ENCODE measurements at regions of chr10 and their contacts with region 1.

Region 1: DNA sequence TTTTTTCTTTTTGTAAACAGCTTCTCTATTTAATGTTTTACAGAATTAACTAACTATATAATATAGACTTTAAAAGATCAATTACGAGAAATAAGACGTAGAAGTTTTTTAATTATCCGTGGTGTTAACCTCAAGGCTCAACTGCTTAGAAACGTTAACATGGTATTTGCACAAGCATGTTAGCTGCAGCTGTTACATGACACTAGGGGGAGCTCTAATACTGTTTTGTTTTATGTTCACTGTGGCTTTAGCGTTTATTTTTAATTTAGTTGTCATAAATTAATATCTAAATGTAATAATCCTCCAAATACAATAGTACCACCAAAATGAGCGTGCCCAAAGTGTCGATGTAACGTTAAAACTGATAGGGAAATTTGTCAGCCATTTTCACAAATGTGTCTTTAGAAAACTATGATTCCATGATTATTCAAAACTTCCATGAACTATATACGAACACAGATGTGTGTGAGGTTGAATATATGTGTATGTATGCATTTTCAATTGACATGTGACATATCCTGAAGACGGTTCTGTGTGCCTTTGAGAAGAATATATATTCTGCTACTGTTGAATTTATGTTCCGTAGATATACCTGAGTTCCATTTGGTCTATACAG is 828.8 kb upstream of the MBL2 start:
- DNase-seq: peak; percentile 28
- ATAC-seq: peak; percentile 27; the same call in 1 of the 2 replicates
- H3K4me3 ChIP-seq: no peak overlapping the region
- H3K27ac ChIP-seq: no peak overlapping the region
- H3K4me1 ChIP-seq: no peaks in the 10 kb centered on the region
- H3K27me3 ChIP-seq: no peaks in the 10 kb centered on the region
- CTCF ChIP-seq: peak; percentile 75
- POLR2A ChIP-seq: no peak
- RAD21 ChIP-seq: peak; percentile 57

Region 2: DNA sequence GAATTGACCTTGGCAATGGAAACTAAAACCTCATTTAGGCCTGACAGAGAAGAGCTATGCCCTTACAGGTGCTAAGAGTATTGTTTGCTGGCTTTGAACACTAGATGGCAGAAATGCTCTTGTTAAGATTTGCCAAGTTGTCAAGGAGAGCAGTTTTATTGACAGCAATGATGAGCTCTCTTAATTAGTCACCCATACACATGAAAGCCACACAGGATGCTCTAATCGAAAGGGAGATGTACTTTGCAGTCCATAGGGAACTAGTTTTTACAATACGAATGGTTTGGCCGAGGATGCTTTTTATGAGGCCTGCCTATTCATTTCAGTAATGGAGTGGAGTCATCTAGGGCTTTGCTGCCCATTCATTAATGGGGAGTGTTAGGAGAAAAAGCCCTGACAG is 783.3 kb before region 1 on chr10:
- CTCF ChIA-PET with region 1: no interaction called
- POLR2A ChIA-PET with region 1: no interaction called
- dilution Hi-C with region 1: no loop called
- in situ Hi-C with region 1: no loop called
- intact Hi-C with region 1: loop called (anchors 5 kb)
- DNase-seq: peak; percentile 59
- ATAC-seq: peak; percentile 73
- H3K4me3 ChIP-seq: no peak overlapping the region
- H3K27ac ChIP-seq: no peak overlapping the region
- H3K4me1 ChIP-seq: no peaks in the 10 kb centered on the region
- H3K27me3 ChIP-seq: no peaks in the 10 kb centered on the region
- CTCF ChIP-seq: peak; percentile 54
- POLR2A ChIP-seq: no peak
- RAD21 ChIP-seq: peak; percentile 67

Region 3: DNA sequence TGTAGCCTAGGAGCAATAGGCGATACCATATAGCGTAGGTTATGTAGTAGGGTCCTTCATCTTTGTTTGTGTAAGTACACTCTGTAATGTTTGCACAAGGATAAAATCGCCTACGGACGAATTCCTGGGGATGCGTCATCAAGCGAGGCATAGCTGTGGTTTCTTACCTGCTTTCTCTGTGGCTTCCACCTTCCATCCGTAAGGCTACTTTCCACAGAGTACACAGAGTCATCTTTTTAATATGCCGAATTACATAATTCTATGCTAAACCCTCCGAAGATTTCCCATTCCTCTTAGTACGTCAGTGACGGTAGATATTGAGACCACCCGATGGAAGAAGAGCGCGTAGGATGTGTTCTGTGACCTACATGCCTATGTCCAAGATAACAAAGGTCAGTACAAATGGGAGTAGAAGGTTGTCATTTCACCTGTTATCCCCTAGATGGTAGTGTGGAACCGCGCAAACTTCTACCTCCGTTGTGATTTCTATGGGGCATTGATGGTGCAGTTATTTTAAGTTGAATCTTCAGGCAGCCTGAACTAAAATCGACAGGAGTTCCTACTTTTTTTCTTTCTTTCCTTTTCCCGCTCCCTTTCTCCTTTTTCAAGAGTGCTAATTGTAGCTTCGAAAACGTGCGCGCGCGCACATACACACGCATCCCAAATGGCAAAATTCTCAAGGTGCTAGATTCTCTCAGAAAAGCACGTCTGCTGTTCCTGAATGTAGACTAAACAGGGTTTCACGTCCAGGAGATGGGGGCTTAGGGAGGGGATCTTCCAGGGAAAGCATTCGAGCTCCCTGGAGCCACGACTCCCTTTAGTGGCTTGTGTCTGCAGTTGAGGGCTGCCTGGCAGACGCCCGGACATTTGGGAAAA is 717.1 kb before region 1 on chr10:
- CTCF ChIA-PET with region 1: no interaction called
- POLR2A ChIA-PET with region 1: no interaction called
- dilution Hi-C with region 1: no loop called
- in situ Hi-C with region 1: no loop called
- intact Hi-C with region 1: loop called (anchors 10 kb)
- DNase-seq: peak; percentile 67
- ATAC-seq: peak; percentile 100
- H3K4me3 ChIP-seq: no peak overlapping the region
- H3K27ac ChIP-seq: no peak overlapping the region
- H3K4me1 ChIP-seq: no peaks in the 10 kb centered on the region
- H3K27me3 ChIP-seq: peaks cover 5% of the 10 kb centered on the region; the same call in 1 of the 2 replicates
- CTCF ChIP-seq: peak; percentile 79
- POLR2A ChIP-seq: no peak
- RAD21 ChIP-seq: peak; percentile 85

Region 4: GRCh38 chr10:53543410-53543809 is 58.0 kb before region 1 on chr10:
- CTCF ChIA-PET with region 1: no interaction called
- POLR2A ChIA-PET with region 1: no interaction called
- dilution Hi-C with region 1: no loop called
- in situ Hi-C with region 1: no loop called
- intact Hi-C with region 1: no loop called
- DNase-seq: no peak
- ATAC-seq: no peak
- H3K4me3 ChIP-seq: no peak overlapping the region
- H3K27ac ChIP-seq: no peak overlapping the region
- H3K4me1 ChIP-seq: no peaks in the 10 kb centered on the region
- H3K27me3 ChIP-seq: no peaks in the 10 kb centered on the region
- CTCF ChIP-seq: no peak
- POLR2A ChIP-seq: no peak
- RAD21 ChIP-seq: no peak

Region 5: GRCh38 chr10:53716156-53716555 is 114.8 kb after region 1 on chr10:
- CTCF ChIA-PET with region 1: no interaction called
- POLR2A ChIA-PET with region 1: no interaction called
- dilution Hi-C with region 1: no loop called
- in situ Hi-C with region 1: loop called (anchors 10 kb)
- intact Hi-C with region 1: no loop called
- DNase-seq: no peak
- ATAC-seq: no peak
- H3K4me3 ChIP-seq: no peak overlapping the region
- H3K27ac ChIP-seq: no peak overlapping the region
- H3K4me1 ChIP-seq: no peaks in the 10 kb centered on the region
- H3K27me3 ChIP-seq: no peaks in the 10 kb centered on the region
- CTCF ChIP-seq: no peak
- POLR2A ChIP-seq: no peak
- RAD21 ChIP-seq: no peak

Region 6: GRCh38 chr10:55263327-55263726 is 1662.0 kb after region 1 on chr10:
- CTCF ChIA-PET with region 1: no interaction called
- POLR2A ChIA-PET with region 1: no interaction called
- dilution Hi-C with region 1: no loop called
- in situ Hi-C with region 1: no loop called
- intact Hi-C with region 1: loop called (anchors 10 kb)
- DNase-seq: no peak
- ATAC-seq: no peak
- H3K4me3 ChIP-seq: no peak overlapping the region
- H3K27ac ChIP-seq: no peak overlapping the region
- H3K4me1 ChIP-seq: no peaks in the 10 kb centered on the region
- H3K27me3 ChIP-seq: no peaks in the 10 kb centered on the region
- CTCF ChIP-seq: no peak
- POLR2A ChIP-seq: no peak
- RAD21 ChIP-seq: no peak